B cell (primary cell): ENCODE measurements at regions of chr7 and their contacts with region 1.

Region 1: DNA sequence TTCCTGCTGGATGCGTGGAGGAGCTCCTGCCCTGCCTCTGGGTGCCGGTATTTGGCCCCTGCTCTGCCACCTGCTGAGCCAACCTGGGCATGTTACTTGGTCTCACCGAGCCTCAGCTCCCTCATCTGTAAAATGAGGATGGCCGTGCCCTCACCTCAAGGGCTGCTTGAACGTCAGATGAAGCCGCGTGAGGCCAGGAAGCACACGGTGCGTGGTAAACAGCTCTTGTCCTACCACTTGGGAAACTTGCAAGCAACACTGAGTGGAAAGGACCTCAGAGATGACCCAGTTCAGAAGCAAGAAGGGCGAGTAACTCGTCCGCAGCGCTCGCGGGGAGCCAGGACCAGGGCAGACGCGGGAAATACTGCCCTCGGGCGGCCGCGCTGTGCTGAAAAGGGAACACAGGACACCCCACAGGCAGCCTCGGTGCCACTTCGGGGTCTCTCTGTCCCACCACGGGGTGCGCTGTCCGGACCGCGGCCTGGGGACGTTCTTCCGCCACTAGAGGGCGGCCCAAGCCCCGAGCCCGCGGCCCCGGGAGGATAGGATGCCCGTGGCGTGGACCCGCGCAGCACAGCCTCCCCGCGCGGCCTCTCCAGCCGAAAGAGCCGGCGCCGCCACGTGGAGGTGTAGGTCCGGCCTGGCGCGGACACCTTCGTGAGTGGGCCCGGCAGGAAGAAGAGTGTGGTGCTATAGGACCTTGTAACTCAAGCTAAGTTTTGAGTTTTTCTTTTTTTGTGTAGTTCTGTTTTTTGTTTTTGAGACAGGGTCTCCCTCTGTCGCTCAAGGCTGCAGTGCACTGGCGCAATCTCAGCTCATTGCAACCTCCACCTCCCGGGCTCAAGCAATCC is 94.1 kb downstream of the PRKAG2 start:
- DNase-seq: peak; percentile 86
- ATAC-seq: peak; percentile 97
- H3K4me3 ChIP-seq: peak overlapping the region in 3 of 5 experiments; percentile 16 to 38 (median 23)
- H3K4me3 Mint-ChIP-seq: peak overlapping the region; percentile 73
- H3K27ac ChIP-seq: no peak overlapping the region
- H3K27ac Mint-ChIP-seq: peak overlapping the region; percentile 13
- H3K4me1 ChIP-seq: peaks cover 8 to 13% of the 10 kb centered on the region in 2 donors
- H3K4me1 Mint-ChIP-seq: peaks cover 10% of the 10 kb centered on the region
- H3K27me3 ChIP-seq: no peaks in the 10 kb centered on the region
- H3K27me3 Mint-ChIP-seq: no peaks in the 10 kb centered on the region
- CTCF ChIP-seq: peak; percentile 97

Region 2: GRCh38 chr7:151727579-151728285 is 55.1 kb before region 1 on chr7:
- CTCF ChIA-PET with region 1: no interaction called
- POLR2A ChIA-PET with region 1: no interaction called
- intact Hi-C with region 1: no loop called
- DNase-seq: peak; percentile 20
- ATAC-seq: peak; percentile 82
- H3K4me3 ChIP-seq: no peak overlapping the region
- H3K4me3 Mint-ChIP-seq: no peak overlapping the region
- H3K27ac ChIP-seq: no peak overlapping the region
- H3K27ac Mint-ChIP-seq: peak overlapping the region; percentile 46
- H3K4me1 ChIP-seq: peaks cover 16 to 35% of the 10 kb centered on the region in 2 donors
- H3K4me1 Mint-ChIP-seq: peaks cover 34% of the 10 kb centered on the region
- H3K27me3 ChIP-seq: no peaks in the 10 kb centered on the region
- H3K27me3 Mint-ChIP-seq: no peaks in the 10 kb centered on the region
- CTCF ChIP-seq: no peak

Region 3: GRCh38 chr7:151759591-151760042 is 23.2 kb before region 1 on chr7:
- CTCF ChIA-PET with region 1: interaction called, 11 read pairs
- POLR2A ChIA-PET with region 1: no interaction called
- intact Hi-C with region 1: no loop called
- DNase-seq: peak; percentile 69
- ATAC-seq: peak; percentile 70
- H3K4me3 ChIP-seq: no peak overlapping the region
- H3K4me3 Mint-ChIP-seq: no peak overlapping the region
- H3K27ac ChIP-seq: no peak overlapping the region
- H3K27ac Mint-ChIP-seq: peak overlapping the region; percentile 53
- H3K4me1 ChIP-seq: peaks cover 0 to 7% of the 10 kb centered on the region in 2 donors
- H3K4me1 Mint-ChIP-seq: peaks cover 16% of the 10 kb centered on the region
- H3K27me3 ChIP-seq: no peaks in the 10 kb centered on the region
- H3K27me3 Mint-ChIP-seq: no peaks in the 10 kb centered on the region
- CTCF ChIP-seq: peak; percentile 86

Region 4: DNA sequence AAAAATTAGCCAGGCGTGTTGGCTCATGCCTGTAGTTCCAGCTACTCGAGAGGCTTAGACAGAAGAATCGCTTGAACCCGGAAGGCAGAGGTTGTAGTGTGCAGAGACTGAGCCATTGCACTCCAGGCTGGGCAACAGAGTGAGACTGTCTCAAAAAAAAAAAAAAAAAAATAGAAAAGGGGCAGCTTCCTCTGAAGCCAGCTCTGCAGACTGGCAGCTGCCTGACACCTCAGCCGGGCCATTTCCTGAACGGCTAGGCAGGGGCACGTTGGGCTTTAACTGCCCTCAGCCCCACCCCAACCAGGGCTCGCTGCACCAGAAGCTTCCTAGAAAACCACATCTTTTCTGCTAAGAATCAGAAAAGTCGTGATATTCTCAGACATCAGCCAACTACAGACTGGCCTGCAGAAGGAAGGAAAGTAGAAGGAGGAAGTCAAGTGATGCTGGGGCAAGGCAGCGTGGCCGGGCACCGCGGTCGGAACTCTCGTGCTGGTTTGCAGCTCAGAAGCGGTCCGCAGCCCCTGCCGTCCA is 56.1 kb after region 1 on chr7:
- CTCF ChIA-PET with region 1: interaction called, 26 read pairs
- POLR2A ChIA-PET with region 1: interaction called, 13 read pairs
- intact Hi-C with region 1: loop called (anchors 2 kb)
- DNase-seq: peak; percentile 86
- ATAC-seq: peak; percentile 90
- H3K4me3 ChIP-seq: peak overlapping the region in 4 of 5 experiments; percentile 1 to 51 (median 30)
- H3K4me3 Mint-ChIP-seq: peak overlapping the region; percentile 89
- H3K27ac ChIP-seq: peak overlapping the region; percentile 59 to 78
- H3K27ac Mint-ChIP-seq: peak overlapping the region; percentile 92
- H3K4me1 ChIP-seq: peaks cover 32 to 47% of the 10 kb centered on the region in 2 donors
- H3K4me1 Mint-ChIP-seq: peaks cover 34% of the 10 kb centered on the region
- H3K27me3 ChIP-seq: no peaks in the 10 kb centered on the region
- H3K27me3 Mint-ChIP-seq: no peaks in the 10 kb centered on the region
- CTCF ChIP-seq: no peak

Region 5: GRCh38 chr7:151876899-151877777 is 94.3 kb after region 1 on chr7 and contains the start of gene PRKAG2:
- CTCF ChIA-PET with region 1: interaction called, 30 read pairs
- POLR2A ChIA-PET with region 1: no interaction called
- intact Hi-C with region 1: loop called (anchors 1 kb)
- DNase-seq: peak; percentile 86
- ATAC-seq: peak; percentile 57
- H3K4me3 ChIP-seq: peak within 1 kb of the TSS; percentile 65 to 100 (median 91)
- H3K4me3 Mint-ChIP-seq: peak within 1 kb of the TSS; percentile 98
- H3K27ac ChIP-seq: peak within 1 kb of the TSS; percentile 57 to 70
- H3K27ac Mint-ChIP-seq: peak within 1 kb of the TSS; percentile 95
- H3K4me1 ChIP-seq: peaks cover 10 to 16% of the 10 kb centered on the region in 2 donors
- H3K4me1 Mint-ChIP-seq: peaks cover 16% of the 10 kb centered on the region
- H3K27me3 ChIP-seq: no peaks in the 10 kb centered on the region
- H3K27me3 Mint-ChIP-seq: no peaks in the 10 kb centered on the region
- CTCF ChIP-seq: peak; percentile 23
- total RNA-seq, gene PRKAG2: 51.8 and 56.3 TPM in 2 replicates

Region 6: GRCh38 chr7:151992375-151992774 is 209.6 kb after region 1 on chr7:
- CTCF ChIA-PET with region 1: interaction called, 3 read pairs
- POLR2A ChIA-PET with region 1: no interaction called
- intact Hi-C with region 1: loop called (anchors 2 kb)
- DNase-seq: peak; percentile 56
- ATAC-seq: peak; percentile 79
- H3K4me3 ChIP-seq: no peak overlapping the region
- H3K4me3 Mint-ChIP-seq: no peak overlapping the region
- H3K27ac ChIP-seq: no peak overlapping the region
- H3K27ac Mint-ChIP-seq: no peak overlapping the region
- H3K4me1 ChIP-seq: peaks cover 3 to 6% of the 10 kb centered on the region in 2 donors
- H3K4me1 Mint-ChIP-seq: peaks cover 2% of the 10 kb centered on the region
- H3K27me3 ChIP-seq: peaks cover 0 to 7% (median 0%) of the 10 kb centered on the region in 4 experiments
- H3K27me3 Mint-ChIP-seq: peaks cover 36% of the 10 kb centered on the region
- CTCF ChIP-seq: no peak